Right ventricle myocardium superior (tissue), 1 donor: ENCODE measurements at regions of chr15 and their contacts with region 1.

Region 1: DNA sequence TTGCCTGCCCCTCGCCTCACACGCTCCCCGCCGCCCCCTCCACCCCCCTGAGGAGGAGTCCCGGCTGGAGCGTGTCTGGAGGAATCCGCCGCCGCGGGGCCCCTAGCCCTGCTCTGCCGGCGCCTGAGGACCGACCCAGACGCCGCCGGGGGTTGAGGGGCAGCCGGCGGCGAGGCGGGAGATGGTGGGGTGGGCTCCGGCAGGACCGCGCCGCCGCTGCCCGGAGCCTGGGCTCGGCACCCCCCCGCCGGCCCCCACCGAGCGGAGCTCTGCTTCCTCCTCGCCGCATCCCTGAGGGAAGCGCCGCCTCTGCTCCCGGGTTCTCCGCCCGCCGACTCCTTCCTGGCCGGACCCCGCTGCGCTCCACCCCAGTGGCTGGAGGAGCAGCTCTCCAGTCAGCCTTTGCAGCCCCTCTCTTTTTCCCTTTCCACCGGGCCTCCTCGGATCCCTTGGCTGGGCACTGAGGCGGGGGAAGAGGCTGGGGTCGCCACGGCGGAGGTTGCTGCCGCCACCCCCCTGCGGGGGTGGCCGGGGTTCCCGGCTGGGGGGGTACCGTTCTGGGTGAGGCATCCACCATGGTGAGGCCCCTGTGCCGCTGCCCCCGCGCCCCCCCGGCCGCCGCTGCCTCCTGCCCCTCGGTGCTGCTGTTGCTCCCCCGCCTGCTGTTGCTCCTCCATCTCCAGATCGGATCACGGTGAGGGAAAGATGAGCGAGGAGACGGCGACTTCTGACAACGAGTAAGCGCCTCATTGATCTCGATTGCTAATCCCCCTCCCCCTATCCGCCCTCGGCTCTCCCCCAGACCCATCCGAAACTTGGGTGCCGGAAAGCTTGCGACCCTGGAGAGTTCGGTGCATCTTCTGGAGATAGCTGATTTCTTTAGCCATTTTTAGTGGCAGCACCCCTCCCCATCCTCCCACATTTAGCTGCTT is at the start of gene SPRED1:
- DNase-seq: peak; percentile 86
- ATAC-seq: peak; percentile 71
- total RNA-seq, gene SPRED1: 9.8 TPM

Region 2: GRCh38 chr15:38349251-38349650 is 96.5 kb after region 1 on chr15:
- intact Hi-C with region 1: loop called (anchors 10 kb)
- DNase-seq: no peak
- ATAC-seq: no peak